Activated naive CD4-positive, alpha-beta T cell treated with anti-CD3 and anti-CD28 coated beads for 36 hours (primary cell): ENCODE measurements at regions of chr13 and their contacts with region 1.

Region 1: DNA sequence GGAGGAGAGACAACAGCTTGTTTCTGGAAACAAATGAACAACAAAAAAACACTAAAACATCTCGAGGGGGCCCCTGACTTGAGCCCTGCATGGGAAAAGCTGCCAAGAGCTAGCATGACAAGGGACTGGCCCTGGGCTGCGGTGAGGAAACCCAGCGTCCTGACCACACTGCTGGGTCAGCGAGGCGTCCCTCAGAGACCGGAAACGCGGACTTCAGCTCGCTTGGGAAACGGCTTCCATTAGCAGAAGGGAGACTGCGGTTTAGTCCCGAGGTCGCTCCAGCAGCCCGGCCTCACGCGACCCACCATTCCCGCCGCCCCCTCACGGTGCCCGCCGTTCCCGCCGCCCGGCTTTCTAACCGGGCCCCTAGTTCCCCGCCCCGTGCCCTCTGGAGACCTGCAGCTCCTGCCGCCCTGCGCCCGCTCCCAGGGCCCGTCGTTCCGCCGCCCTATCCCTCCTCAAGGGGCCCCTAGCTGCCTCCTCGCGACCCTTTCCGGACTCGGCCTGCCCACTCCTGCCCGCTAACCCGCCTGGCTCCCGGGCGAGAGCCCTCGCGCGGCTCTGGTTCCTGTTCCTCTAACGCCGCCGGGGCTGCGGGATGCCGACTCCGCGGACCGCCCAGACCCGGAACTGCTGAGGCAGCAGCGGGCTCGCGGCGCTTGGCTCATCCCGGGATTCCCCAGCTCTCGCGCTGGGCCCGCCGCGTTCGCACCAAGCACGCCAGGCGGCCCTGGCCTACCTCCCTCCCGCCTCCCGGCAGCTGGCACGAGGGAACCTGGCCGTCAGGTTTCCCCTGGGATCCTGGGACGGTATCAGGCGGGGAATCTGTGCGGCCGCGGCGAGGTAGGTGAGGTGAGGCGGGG is at the start of gene CCDC122:
- DNase-seq: peak; percentile 86
- H3K4me3 Mint-ChIP-seq: peak within 1 kb of the TSS; percentile 88
- H3K27ac Mint-ChIP-seq: peak within 1 kb of the TSS; percentile 83
- H3K4me1 Mint-ChIP-seq: peaks cover 23% of the 10 kb centered on the region
- H3K27me3 Mint-ChIP-seq: peaks cover 12% of the 10 kb centered on the region
- total RNA-seq, gene CCDC122: 2.1 to 2.2 TPM

Region 2: DNA sequence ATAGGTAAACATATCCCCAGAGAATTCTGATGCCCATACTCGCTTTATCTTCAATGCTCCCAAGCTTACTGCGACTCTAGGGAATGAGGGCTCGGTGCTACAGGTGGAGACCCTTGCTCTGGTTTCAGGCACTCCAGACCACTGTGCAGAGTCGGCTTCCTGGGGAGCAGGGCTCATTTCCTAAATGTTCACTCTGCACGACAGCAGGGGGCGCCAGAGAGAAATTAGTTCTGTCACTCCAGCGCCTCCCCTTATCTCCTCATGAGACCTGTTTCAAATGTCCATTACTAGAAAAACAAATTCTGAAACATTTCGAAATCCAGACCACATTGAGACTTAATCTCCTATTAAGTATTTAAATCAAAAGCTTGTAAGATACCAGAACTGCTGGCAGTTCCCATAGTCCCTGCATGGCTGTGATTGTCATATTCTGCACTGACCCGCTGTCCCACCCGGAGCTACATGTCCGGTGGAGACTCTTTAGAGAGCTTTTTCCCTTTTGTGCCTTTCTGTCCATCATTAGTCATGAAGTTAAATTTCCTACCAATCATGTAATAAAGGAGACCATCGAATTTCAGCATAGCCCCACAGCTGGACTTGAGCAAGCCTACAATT is 909.5 kb before region 1 on chr13:
- CTCF ChIA-PET with region 1: interaction called, 3 read pairs
- intact Hi-C with region 1: loop called (anchors 1 kb)
- DNase-seq: peak; percentile 88
- H3K4me3 Mint-ChIP-seq: no peak overlapping the region
- H3K27ac Mint-ChIP-seq: no peak overlapping the region
- H3K4me1 Mint-ChIP-seq: peaks cover 8% of the 10 kb centered on the region
- H3K27me3 Mint-ChIP-seq: no peaks in the 10 kb centered on the region

Region 3: DNA sequence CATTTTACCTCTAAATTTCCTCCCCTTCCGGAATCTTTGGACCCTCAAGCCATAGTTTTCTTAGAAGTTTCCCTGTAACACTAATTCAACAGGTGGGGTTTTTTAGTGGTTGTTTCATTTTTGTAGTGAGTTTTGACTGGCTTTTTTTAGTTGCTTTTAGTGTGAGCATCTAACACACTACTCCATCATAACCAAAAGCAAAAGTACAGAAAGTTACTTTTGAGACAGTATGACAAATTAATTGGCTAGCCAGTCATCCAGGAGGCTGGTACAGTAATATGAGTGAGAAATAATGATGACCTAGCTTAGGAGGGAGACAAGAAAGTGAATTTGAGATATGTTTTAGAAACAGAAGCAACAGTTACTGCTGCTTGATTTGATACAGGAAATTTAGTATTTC is 784.2 kb before region 1 on chr13:
- CTCF ChIA-PET with region 1: no interaction called
- intact Hi-C with region 1: loop called (anchors 10 kb)
- DNase-seq: no peak
- H3K4me3 Mint-ChIP-seq: no peak overlapping the region
- H3K27ac Mint-ChIP-seq: peak overlapping the region; percentile 62
- H3K4me1 Mint-ChIP-seq: peaks cover 22% of the 10 kb centered on the region
- H3K27me3 Mint-ChIP-seq: no peaks in the 10 kb centered on the region

Region 4: GRCh38 chr13:43368003-43368402 is 511.1 kb before region 1 on chr13:
- CTCF ChIA-PET with region 1: no interaction called
- intact Hi-C with region 1: loop called (anchors 10 kb)
- DNase-seq: no peak
- H3K4me3 Mint-ChIP-seq: peak overlapping the region; percentile 20
- H3K27ac Mint-ChIP-seq: no peak overlapping the region
- H3K4me1 Mint-ChIP-seq: peaks cover 32% of the 10 kb centered on the region
- H3K27me3 Mint-ChIP-seq: no peaks in the 10 kb centered on the region

Region 5: DNA sequence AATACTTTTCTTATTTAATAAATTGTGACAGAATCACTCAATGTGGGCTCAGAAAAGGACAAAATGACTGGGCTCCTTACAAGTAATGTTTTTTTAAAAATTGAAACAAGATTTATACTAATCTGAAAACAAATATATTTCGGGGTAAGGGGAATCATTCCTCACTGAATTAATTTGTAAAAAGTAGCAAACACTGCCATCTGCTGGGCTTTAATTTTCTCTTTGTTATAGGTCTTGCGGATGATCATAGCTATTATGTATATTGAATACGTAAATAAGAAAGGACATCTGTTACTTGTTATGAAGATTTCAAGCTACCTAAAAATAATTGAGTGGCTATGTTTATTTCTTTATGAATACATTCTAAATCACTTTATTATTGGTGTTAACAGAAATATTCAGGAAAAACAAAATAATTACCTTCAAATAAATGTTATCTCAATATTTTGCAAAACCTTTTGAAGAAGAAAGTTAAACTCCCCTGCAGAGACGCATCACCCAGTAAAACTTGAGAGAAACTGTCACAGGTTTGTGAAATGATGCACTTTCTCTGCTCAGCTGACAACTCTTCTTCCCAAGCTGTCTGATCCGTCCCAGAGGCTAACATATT is 74.6 kb before region 1 on chr13:
- CTCF ChIA-PET with region 1: interaction called, 4 read pairs
- intact Hi-C with region 1: loop called (anchors 2 kb)
- DNase-seq: peak; percentile 15
- H3K4me3 Mint-ChIP-seq: no peak overlapping the region
- H3K27ac Mint-ChIP-seq: no peak overlapping the region
- H3K4me1 Mint-ChIP-seq: peaks cover 8% of the 10 kb centered on the region
- H3K27me3 Mint-ChIP-seq: peaks cover 17% of the 10 kb centered on the region